Natural killer cell (primary cell): ENCODE measurements at regions of chr7 and their contacts with region 1.

Region 1: GRCh38 chr7:76020031-76020714 is 25.8 kb upstream of the TMEM120A start:
- DNase-seq: peak; percentile 70 to 87
- ATAC-seq: peak; percentile 72 to 74 (median 74)
- H3K4me3 ChIP-seq: no peak overlapping the region
- H3K4me3 Mint-ChIP-seq: no peak overlapping the region
- H3K27ac ChIP-seq: no peak overlapping the region
- H3K27ac Mint-ChIP-seq: no peak overlapping the region
- H3K4me1 ChIP-seq: peaks cover 9% of the 10 kb centered on the region
- H3K4me1 Mint-ChIP-seq: peaks cover 0 to 11% of the 10 kb centered on the region in 2 donors
- H3K27me3 ChIP-seq: no peaks in the 10 kb centered on the region
- H3K27me3 Mint-ChIP-seq: no peaks in the 10 kb centered on the region
- CTCF ChIP-seq: peak; percentile 91

Region 2: GRCh38 chr7:75866489-75867389 is 153.4 kb before region 1 on chr7:
- intact Hi-C with region 1: loop called (anchors 1 kb)
- DNase-seq: peak; percentile 24 to 76
- ATAC-seq: peak; percentile 80 to 88 (median 85)
- H3K4me3 ChIP-seq: no peak overlapping the region
- H3K4me3 Mint-ChIP-seq: no peak overlapping the region
- H3K27ac ChIP-seq: no peak overlapping the region
- H3K27ac Mint-ChIP-seq: no peak overlapping the region
- H3K4me1 ChIP-seq: peaks cover 3% of the 10 kb centered on the region
- H3K4me1 Mint-ChIP-seq: peaks cover 0 to 6% of the 10 kb centered on the region in 2 donors
- H3K27me3 ChIP-seq: no peaks in the 10 kb centered on the region
- H3K27me3 Mint-ChIP-seq: peaks cover 7 to 11% of the 10 kb centered on the region in 2 donors
- CTCF ChIP-seq: peak; percentile 70

Region 3: GRCh38 chr7:76071316-76072242 is 51.4 kb after region 1 on chr7:
- intact Hi-C with region 1: no loop called
- DNase-seq: no peak
- ATAC-seq: no peak
- H3K4me3 ChIP-seq: no peak overlapping the region
- H3K4me3 Mint-ChIP-seq: no peak overlapping the region
- H3K27ac ChIP-seq: no peak overlapping the region
- H3K27ac Mint-ChIP-seq: no peak overlapping the region
- H3K4me1 ChIP-seq: no peaks in the 10 kb centered on the region
- H3K4me1 Mint-ChIP-seq: no peaks in the 10 kb centered on the region
- H3K27me3 ChIP-seq: no peaks in the 10 kb centered on the region
- H3K27me3 Mint-ChIP-seq: no peaks in the 10 kb centered on the region
- CTCF ChIP-seq: no peak